SK-N-SH (cell line): ENCODE measurements at regions of chr1 and their contacts with region 1.

Region 1: GRCh38 chr1:34113887-34114286 is 51.1 kb downstream of the CSMD2 start:
- DNase-seq: peak; percentile 30
- H3K4me3 ChIP-seq: no peak overlapping the region
- H3K27ac ChIP-seq: no peak overlapping the region
- H3K4me1 ChIP-seq: no peaks in the 10 kb centered on the region
- H3K27me3 ChIP-seq: no peaks in the 10 kb centered on the region
- CTCF ChIP-seq: no peak
- EP300 ChIP-seq: no peak
- RAD21 ChIP-seq: peak; percentile 45; the same call in 1 of the 2 replicates

Region 2: DNA sequence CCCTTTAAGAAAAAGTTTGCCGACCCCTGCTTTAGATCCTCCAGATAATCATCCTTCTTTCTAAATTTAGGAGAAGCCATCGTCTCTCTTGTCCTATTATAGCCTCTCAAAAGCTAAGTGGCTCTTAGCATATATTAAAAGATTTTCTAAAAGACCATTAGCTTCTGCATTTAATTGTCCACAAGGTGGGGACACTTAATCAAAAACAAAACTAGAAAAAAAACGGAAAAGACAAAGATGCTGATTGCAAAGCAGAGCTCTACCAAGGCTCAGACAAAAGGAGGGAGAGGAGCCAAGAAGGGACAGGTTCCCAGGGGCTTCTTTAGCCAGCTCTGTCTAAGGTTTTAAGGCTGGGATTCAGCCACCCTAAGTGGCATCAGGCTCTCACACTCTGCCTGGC is 378.3 kb before region 1 on chr1:
- CTCF ChIA-PET with region 1: interaction called, 22 read pairs
- POLR2A ChIA-PET with region 1: no interaction called
- DNase-seq: peak; percentile 54
- H3K4me3 ChIP-seq: no peak overlapping the region
- H3K27ac ChIP-seq: no peak overlapping the region
- H3K4me1 ChIP-seq: no peaks in the 10 kb centered on the region; a peak in 1 of 4 replicates
- H3K27me3 ChIP-seq: no peaks in the 10 kb centered on the region
- CTCF ChIP-seq: no peak
- EP300 ChIP-seq: no peak
- RAD21 ChIP-seq: peak; percentile 78

Region 3: GRCh38 chr1:34073028-34073695 is 40.7 kb before region 1 on chr1:
- CTCF ChIA-PET with region 1: no interaction called
- POLR2A ChIA-PET with region 1: no interaction called
- DNase-seq: peak; percentile 38
- H3K4me3 ChIP-seq: no peak overlapping the region
- H3K27ac ChIP-seq: no peak overlapping the region
- H3K4me1 ChIP-seq: no peaks in the 10 kb centered on the region; a peak in 1 of 4 replicates
- H3K27me3 ChIP-seq: no peaks in the 10 kb centered on the region
- CTCF ChIP-seq: no peak
- EP300 ChIP-seq: peak in 1 of 2 experiments; percentile 54; a peak in 2 of 4 replicates
- RAD21 ChIP-seq: peak; percentile 5; the same call in 1 of the 2 replicates

Region 4: DNA sequence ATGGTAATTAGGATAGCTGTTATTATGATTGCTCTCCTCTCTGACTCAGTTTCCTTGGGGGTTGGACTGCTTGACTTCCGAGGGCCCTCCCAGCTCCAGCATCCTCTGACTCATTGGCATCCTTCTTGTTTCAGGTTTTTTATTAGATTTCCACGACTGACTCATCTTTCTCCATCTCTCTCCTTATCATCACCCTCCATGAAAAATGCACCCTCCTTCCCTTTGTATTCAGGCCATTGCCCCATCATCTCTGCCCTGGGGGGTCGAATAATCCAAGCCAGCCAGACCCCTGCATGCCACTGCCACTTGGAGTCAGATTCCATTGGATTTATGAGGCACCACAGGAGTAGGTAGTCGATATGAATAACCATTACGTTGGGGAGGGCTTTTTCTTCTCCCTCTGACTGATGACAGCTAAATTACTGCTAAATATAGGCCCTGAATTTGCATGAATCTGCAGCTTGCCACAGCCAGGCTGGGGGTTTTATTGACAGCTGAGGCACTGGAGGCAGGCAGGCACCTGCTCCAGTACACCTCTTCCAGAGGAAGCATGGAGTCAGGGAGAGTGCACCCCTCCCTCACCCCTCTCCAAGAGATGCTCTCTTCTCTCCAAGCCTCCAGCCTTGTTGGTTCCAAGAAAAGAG is 154.5 kb after region 1 on chr1:
- CTCF ChIA-PET with region 1: no interaction called
- POLR2A ChIA-PET with region 1: no interaction called
- DNase-seq: no peak
- H3K4me3 ChIP-seq: no peak overlapping the region
- H3K27ac ChIP-seq: no peak overlapping the region
- H3K4me1 ChIP-seq: no peaks in the 10 kb centered on the region; a peak in 1 of 4 replicates
- H3K27me3 ChIP-seq: no peaks in the 10 kb centered on the region
- CTCF ChIP-seq: no peak
- EP300 ChIP-seq: no peak
- RAD21 ChIP-seq: no peak

Region 5: GRCh38 chr1:34597877-34598514 is 484.1 kb after region 1 on chr1:
- CTCF ChIA-PET with region 1: interaction called, 15 read pairs
- POLR2A ChIA-PET with region 1: no interaction called
- DNase-seq: peak; percentile 75
- H3K4me3 ChIP-seq: peak overlapping the region in 1 of 2 experiments; percentile 52; a peak in 1 of 4 replicates
- H3K27ac ChIP-seq: no peak overlapping the region
- H3K4me1 ChIP-seq: no peaks in the 10 kb centered on the region
- H3K27me3 ChIP-seq: no peaks in the 10 kb centered on the region
- CTCF ChIP-seq: peak; percentile 32
- EP300 ChIP-seq: no peak
- RAD21 ChIP-seq: peak; percentile 91